GM10248 (cell line): ENCODE measurements at regions of chr6 and their contacts with region 1.

Region 1: DNA sequence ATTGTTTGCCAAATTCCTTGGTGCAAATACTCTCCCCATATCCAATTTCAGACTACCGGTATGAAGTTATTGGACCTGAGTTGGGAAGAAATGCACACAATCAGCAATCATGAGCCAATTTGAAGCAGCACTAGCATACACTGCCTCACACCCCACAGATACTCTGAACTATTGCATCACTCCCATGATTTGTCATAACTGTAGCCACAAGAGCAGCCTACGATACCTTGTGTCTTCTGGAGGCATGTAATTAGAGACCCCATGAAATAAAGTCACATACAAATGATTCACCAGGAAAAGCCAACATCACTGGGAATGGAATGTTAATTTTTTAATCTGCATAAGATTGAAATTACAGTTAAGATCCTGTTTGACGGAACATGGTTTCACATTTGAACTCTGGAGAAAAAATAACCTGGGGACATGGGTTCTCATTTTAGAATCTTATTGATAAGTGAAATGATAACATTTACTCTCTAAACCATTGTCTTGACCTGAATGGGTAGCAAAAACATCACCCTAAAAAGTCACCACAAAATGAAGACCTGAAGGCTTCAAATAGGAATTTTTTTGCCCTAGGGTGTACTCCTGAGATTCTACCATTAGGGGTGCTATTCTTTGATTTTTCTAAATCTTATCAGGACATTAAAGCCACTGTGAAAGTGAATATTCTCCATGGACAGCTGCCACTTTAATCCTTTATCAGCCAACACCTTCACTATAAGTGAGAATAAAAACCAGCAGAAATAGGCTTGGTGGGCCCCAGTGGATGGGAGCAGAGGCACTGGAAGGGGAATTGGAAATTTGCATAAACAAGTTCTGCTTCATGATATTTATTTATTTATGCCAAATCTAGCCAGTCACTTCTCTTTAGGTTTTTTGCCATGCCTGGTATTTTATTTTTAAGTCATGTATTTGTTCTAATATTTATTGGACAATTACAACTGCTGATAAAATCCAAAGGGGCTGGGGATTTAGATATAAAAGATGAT is 34.5 kb upstream of the HBS1L start:
- DNase-seq: peak; percentile 45
- CTCF ChIP-seq: peak; percentile 14

Region 2: GRCh38 chr6:135054569-135055498 is 34.3 kb before region 1 on chr6 and contains the start of gene HBS1L:
- CTCF ChIA-PET with region 1: interaction called, 36 read pairs
- POLR2A ChIA-PET with region 1: interaction called, 3 read pairs
- DNase-seq: peak; percentile 98
- CTCF ChIP-seq: no peak

Region 3: GRCh38 chr6:135105710-135106109 is 16.6 kb after region 1 on chr6:
- CTCF ChIA-PET with region 1: interaction called, 49 read pairs
- POLR2A ChIA-PET with region 1: no interaction called
- DNase-seq: no peak
- CTCF ChIP-seq: no peak

Region 4: GRCh38 chr6:135121434-135121833 is 32.3 kb after region 1 on chr6:
- CTCF ChIA-PET with region 1: interaction called, 11 read pairs
- POLR2A ChIA-PET with region 1: no interaction called
- DNase-seq: no peak
- CTCF ChIP-seq: no peak

Region 5: GRCh38 chr6:135145063-135145800 is 56.1 kb after region 1 on chr6:
- CTCF ChIA-PET with region 1: interaction called, 21 read pairs
- POLR2A ChIA-PET with region 1: no interaction called
- DNase-seq: no peak
- CTCF ChIP-seq: peak; percentile 56

Region 6: DNA sequence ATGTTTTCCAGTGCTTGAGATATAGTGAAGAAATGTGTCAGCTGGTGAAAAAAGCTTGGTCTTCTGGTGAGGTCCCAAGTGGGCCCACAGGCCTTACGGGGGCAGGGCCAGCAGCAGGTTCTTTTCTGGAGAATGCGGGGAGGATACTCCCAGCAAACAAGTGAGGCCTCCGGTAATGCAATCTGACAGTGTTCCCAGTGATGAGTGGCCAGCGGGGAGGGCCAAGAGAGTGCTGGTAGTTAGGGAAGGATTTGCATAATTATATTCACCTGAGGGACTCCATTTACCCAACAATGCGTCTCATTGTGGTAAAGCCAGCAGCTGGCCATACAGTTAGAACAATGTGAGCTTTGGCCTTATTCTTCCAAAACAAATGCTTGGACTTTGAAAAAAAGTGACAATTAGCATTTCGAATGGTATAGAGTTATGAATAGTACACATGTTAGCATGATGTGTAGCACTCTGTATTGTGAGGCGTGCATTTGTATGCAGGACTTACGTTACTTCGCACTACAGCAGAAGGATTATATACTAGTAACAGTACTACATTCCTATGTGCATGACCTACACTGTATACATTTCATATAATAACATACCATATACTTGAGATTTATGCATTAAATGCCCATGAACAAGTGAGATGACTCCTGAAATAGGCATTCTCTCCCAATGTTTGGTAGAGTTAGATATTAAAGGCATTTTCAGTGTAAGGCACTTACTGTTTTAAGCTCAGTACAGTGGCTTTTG is 161.8 kb after region 1 on chr6:
- CTCF ChIA-PET with region 1: no interaction called
- POLR2A ChIA-PET with region 1: no interaction called
- DNase-seq: no peak
- CTCF ChIP-seq: no peak